Endothelial cell of umbilical vein (primary cell): ENCODE measurements at regions of chr1 and their contacts with region 1.

Region 1: DNA sequence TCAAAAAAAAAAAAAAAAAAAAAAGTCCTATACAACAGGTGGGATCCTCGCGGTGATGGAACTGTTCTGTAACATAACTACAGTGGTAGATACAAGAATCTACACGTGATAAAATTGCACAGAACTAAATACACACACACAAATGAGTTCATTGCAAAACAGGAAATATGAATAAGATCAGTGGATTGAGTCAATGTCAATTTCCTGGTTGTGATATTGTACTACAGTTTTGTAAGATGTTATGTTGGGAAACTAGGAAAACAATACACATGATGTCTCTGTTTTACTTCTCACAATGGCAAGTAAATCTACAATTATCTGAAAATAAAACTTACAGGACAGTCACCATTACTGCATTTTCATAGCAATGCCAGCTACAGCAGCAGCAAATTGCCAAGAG is 59.8 kb downstream of the ITGB3BP start:
- DNase-seq: peak; percentile 87
- H3K4me3 ChIP-seq: peak overlapping the region in 1 of 3 experiments; percentile 9
- H3K27ac ChIP-seq: peak overlapping the region; percentile 83
- H3K4me1 ChIP-seq: peaks cover 13% of the 10 kb centered on the region
- H3K27me3 ChIP-seq: no peaks in the 10 kb centered on the region
- CTCF ChIP-seq: no peak
- POLR2A ChIP-seq: no peak

Region 2: DNA sequence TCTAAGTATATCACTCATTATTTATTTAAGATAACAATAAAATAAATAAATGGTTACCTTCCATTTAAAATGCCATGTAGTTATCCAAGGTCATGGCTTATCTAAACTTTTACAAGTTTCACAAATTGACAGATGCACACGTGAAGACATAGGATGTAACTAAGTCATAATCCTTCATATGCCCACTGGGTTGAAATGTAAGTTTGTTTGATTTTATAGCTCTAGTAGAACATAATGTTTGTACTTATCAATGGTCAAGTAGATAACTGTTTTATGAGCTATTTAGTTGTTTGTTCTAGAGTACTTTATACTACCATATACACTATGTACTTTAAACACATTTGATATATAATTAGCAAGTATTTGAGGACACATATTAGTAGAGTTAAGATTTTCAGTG is 16.8 kb after region 1 on chr1:
- CTCF ChIA-PET with region 1: interaction called, 3 read pairs
- POLR2A ChIA-PET with region 1: no interaction called
- dilution Hi-C with region 1: no loop called
- intact Hi-C with region 1: loop called (anchors 2 kb)
- DNase-seq: no peak
- H3K4me3 ChIP-seq: no peak overlapping the region
- H3K27ac ChIP-seq: no peak overlapping the region
- H3K4me1 ChIP-seq: no peaks in the 10 kb centered on the region
- H3K27me3 ChIP-seq: no peaks in the 10 kb centered on the region
- CTCF ChIP-seq: no peak
- POLR2A ChIP-seq: no peak